AG04449 (cell line): ENCODE measurements at regions of chr4 and their contacts with region 1.

Region 1: GRCh38 chr4:23728393-23728792 is 161.5 kb downstream of the PPARGC1A start:
- DNase-seq: peak; percentile 87
- H3K4me3 ChIP-seq: no peak overlapping the region
- CTCF ChIP-seq: no peak

Region 2: GRCh38 chr4:23717528-23718248 is 10.7 kb before region 1 on chr4:
- CTCF ChIA-PET with region 1: interaction called, 26 read pairs
- POLR2A ChIA-PET with region 1: no interaction called
- DNase-seq: no peak
- H3K4me3 ChIP-seq: no peak overlapping the region
- CTCF ChIP-seq: peak; percentile 26